Posterior vena cava (tissue), 2 donors: ENCODE measurements at regions of chr3 and their contacts with region 1.

Region 1: GRCh38 chr3:8540456-8540855 is 38.8 kb downstream of the LMCD1 start:
- DNase-seq: no peak

Region 2: DNA sequence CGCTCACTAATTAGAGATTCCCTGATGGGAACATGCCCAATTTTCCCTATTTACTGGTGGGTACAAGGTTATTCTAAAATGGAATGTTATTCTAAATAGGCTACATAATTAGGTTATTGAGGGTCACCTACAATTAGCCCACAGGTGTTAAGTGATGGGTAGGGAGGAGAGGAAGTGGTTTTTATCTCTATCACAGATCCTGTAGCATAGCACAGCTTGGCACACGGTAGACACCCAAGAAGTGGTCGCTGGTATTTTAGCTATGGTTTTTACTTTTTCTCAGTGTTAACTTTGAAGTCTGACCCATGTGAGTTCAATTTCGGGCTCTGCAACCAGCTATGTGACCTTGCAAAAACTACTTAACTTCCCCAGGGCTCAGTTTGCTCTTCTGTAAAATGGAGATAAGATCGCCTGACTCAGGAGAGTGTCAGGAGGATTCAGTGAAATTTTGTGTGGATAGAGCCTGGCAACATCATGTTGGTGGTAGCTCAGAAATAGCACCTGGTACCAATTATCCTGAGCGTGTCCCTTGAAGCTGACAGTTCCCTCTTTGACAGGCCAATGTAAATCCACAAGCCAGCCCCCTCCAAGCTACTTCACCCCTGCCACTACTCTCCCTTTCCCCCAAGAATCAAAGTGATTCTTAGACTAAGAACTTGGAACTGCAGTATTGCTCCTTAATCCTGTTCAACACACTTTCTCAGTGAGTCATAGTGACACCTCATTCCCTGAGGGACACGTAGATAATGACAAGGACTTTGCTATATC is 47.5 kb before region 1 on chr3:
- intact Hi-C with region 1: loop called in 1 of 2 experiments (anchors 1 kb)
- DNase-seq: no peak

Region 3: GRCh38 chr3:8784676-8785435 is 244.4 kb after region 1 on chr3:
- intact Hi-C with region 1: no loop called
- DNase-seq: no peak